Posterior vena cava (tissue), 2 donors: ENCODE measurements at regions of chr15 and their contacts with region 1.

Region 1: GRCh38 chr15:77807115-77807514 is 174.4 kb upstream of the LINGO1 start:
- DNase-seq: no peak

Region 2: DNA sequence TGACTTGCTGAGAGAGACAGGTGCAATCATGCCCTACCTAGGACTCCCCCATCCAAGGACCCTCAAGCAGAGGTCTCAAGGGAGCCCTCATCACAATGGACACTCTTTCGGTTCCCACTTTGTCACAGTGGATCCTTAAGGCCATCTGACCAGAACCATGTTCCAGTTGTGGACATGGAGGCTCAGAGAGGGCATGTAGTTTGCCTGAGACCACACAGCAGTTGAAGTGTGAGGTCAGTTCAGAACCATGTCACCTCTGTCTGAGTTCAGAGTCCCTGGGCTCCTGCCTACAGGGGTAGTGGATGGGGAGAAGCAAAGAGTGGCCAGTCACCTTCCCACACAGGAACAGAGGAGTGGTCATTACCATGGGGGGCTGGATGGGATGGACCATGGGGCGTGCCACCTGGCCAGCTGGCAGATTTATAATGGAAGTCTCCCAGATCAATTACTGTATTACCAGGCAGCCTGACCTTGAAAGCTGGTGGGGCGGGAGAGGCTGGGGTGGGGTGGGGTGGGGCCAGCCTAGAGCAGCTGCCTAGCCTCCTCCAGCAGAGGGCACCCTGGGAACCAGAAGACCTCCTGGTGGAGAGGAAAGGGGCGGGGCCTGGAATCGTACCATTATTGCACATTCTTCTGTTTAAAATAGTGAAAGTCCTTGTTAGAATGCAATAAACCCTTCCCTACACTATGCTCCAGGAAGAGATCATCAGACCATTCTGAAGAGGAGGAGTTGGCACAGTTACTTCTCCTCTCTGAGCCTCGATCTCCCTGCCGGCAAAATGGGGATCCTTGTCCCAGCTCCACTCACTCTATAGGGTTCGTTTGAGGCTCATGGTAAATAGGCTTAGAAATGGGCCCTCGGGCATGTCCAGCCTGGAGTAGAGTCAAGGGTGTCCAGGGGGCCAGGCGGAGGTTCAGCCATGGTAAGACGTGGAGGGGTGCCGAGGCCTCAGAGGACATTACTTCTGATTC is 147.5 kb before region 1 on chr15:
- intact Hi-C with region 1: loop called in 1 of 2 experiments (anchors 10 kb)
- DNase-seq: no peak

Region 3: GRCh38 chr15:77695961-77696582 is 111.0 kb before region 1 on chr15:
- intact Hi-C with region 1: no loop called
- DNase-seq: no peak

Region 4: DNA sequence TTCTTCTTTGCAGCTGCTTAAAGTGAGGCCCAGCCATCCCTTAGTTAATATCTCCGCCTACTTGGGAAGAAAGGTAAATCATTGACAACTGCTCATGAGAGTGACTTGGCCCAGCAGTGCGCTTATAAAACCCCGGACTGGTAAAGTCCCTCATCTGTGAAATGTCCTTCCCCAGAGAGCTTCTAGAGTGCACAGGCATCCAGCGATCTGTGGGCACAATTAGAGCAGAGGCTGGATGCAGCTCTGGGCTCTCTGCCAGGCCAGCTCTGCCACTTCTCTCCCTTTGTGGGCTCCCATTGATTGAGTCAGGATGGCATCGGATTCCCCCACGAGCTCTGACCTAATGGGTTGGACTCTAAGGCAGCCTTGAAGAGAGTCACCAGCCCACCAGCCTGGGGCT is 44.6 kb after region 1 on chr15:
- intact Hi-C with region 1: loop called in 1 of 2 experiments (anchors 1 kb)
- DNase-seq: peak; percentile 37